A673 (cell line): ENCODE measurements at regions of chr15 and their contacts with region 1.

Region 1: GRCh38 chr15:96330450-96331145 is at the start of gene NR2F2:
- DNase-seq: peak; percentile 99
- H3K4me3 ChIP-seq: peak within 1 kb of the TSS; percentile 77
- H3K27ac ChIP-seq: peak within 1 kb of the TSS; percentile 97
- H3K4me1 ChIP-seq: peaks cover 23% of the 10 kb centered on the region
- H3K27me3 ChIP-seq: no peaks in the 10 kb centered on the region
- CTCF ChIP-seq: no peak
- total RNA-seq, gene NR2F2: 106 and 138 TPM in 2 replicates

Region 2: DNA sequence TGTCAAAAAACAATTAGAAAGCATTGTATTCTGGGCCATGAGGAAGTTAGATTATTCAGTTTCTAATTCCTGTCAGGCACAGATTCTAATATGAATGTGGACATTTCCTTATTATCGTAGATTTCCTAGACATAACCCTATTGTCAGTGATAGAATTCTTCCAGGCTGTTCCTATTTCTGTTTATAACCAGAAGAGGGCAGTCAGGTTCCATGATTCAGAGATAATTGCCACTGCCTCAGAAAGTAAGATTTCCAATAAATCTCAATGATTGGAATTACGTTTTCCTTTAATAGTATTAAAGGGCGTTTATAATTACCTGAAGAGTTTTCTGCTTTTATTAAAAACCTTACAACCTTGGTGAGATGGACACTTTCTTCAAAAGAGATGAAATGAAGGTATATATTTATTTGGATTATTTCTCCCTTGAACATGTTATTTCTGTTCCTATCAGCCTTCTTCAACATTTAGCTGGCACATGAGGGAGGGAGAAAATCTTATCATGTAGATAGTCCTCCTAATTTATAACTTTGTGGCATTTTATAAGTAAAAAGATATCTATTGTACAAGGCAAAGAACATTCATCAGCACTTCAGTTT is 1660.1 kb before region 1 on chr15:
- CTCF ChIA-PET with region 1: no interaction called
- POLR2A ChIA-PET with region 1: no interaction called
- intact Hi-C with region 1: loop called (anchors 10 kb)
- DNase-seq: peak; percentile 59
- H3K4me3 ChIP-seq: no peak overlapping the region
- H3K27ac ChIP-seq: no peak overlapping the region
- H3K4me1 ChIP-seq: peaks cover 9% of the 10 kb centered on the region
- H3K27me3 ChIP-seq: no peaks in the 10 kb centered on the region
- CTCF ChIP-seq: peak; percentile 80

Region 3: GRCh38 chr15:95875121-95875688 is 455.4 kb before region 1 on chr15:
- CTCF ChIA-PET with region 1: interaction called, 8 read pairs
- POLR2A ChIA-PET with region 1: no interaction called
- intact Hi-C with region 1: loop called (anchors 10 kb)
- DNase-seq: peak; percentile 91
- H3K4me3 ChIP-seq: no peak overlapping the region
- H3K27ac ChIP-seq: peak overlapping the region; percentile 85
- H3K4me1 ChIP-seq: peaks cover 29% of the 10 kb centered on the region
- H3K27me3 ChIP-seq: no peaks in the 10 kb centered on the region
- CTCF ChIP-seq: no peak

Region 4: DNA sequence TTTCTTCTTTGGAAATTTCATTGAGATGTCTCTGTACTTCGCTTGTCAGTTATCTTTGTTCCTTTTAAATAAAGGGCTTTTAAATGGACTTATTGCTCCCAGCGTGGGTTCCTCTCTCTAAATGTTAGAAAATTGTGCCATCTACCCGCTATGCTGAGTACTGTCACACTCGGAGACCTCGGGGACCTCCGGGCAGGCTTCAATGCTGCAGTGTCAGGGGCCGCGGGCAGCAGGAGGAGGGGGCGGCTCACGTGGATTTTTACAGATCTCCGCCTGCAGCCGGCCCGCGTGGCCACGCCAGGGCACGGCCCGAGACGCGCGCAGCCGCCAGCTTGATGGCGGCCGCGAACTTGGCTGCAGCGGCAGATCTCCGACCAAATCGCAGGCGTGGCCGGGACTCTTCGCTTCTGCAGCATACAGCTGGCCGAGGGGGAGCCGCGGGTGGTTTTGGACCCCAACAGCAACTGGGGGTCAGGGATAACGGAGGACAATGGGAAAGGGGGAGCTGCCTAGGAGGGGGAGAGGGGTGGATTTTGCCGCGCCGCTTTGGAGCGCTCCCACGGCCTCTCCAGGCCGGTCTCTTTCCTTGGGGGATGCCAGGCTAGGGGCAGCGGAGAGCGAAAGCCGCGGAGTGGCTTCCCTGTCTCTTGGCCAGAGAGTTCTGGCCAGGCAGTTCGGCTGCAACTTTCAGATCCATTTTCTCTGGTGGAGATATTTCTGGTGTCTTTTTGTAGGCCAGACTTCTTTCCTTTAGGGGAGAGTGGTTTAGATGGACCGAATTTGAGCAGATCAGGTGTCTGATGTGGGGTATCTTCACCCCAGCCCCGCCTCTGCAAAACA is 15.2 kb after region 1 on chr15:
- CTCF ChIA-PET with region 1: interaction called, 16 read pairs
- POLR2A ChIA-PET with region 1: interaction called, 3 read pairs
- intact Hi-C with region 1: no loop called
- DNase-seq: peak; percentile 88
- H3K4me3 ChIP-seq: peak overlapping the region; percentile 50
- H3K27ac ChIP-seq: peak overlapping the region; percentile 79
- H3K4me1 ChIP-seq: peaks cover 88% of the 10 kb centered on the region
- H3K27me3 ChIP-seq: no peaks in the 10 kb centered on the region
- CTCF ChIP-seq: peak; percentile 79

Region 5: GRCh38 chr15:97072545-97072944 is 741.9 kb after region 1 on chr15:
- CTCF ChIA-PET with region 1: no interaction called
- POLR2A ChIA-PET with region 1: no interaction called
- intact Hi-C with region 1: loop called (anchors 5 kb)
- DNase-seq: no peak
- H3K4me3 ChIP-seq: no peak overlapping the region
- H3K27ac ChIP-seq: peak overlapping the region; percentile 72
- H3K4me1 ChIP-seq: peaks cover 56% of the 10 kb centered on the region
- H3K27me3 ChIP-seq: no peaks in the 10 kb centered on the region
- CTCF ChIP-seq: no peak

Region 6: DNA sequence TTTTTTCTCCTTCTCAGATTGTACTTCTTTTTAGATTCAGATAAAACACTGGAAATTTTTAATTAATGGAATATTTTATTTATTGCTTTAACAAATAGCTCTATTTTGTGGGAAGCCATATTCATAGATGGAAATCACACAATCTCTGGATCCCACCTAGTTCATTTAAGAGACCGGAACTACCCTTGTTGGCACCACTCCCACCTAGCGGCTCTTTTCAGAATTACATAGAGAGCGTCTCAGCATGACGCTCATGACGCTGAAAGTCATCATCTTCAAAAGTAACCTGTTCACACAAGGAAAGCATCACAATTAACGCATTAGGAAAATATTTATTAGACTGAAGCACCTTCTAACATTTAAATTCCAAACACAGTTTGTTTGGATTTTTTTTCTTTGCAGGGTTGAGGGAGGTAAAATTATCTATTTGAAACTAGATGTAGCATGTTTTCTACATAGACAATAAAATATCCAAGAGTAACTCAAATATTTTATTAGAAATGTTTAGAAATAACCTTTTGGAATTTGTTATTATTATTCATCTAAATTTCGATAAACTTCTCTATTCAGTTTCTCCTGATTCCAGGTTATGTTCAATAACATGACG is 1415.0 kb after region 1 on chr15:
- CTCF ChIA-PET with region 1: no interaction called
- POLR2A ChIA-PET with region 1: no interaction called
- intact Hi-C with region 1: loop called (anchors 5 kb)
- DNase-seq: peak; percentile 75
- H3K4me3 ChIP-seq: no peak overlapping the region
- H3K27ac ChIP-seq: no peak overlapping the region
- H3K4me1 ChIP-seq: no peaks in the 10 kb centered on the region
- H3K27me3 ChIP-seq: no peaks in the 10 kb centered on the region
- CTCF ChIP-seq: peak; percentile 72